ENCODE measurements at regions of chr13 and their contacts with region 1.

Region 1: DNA sequence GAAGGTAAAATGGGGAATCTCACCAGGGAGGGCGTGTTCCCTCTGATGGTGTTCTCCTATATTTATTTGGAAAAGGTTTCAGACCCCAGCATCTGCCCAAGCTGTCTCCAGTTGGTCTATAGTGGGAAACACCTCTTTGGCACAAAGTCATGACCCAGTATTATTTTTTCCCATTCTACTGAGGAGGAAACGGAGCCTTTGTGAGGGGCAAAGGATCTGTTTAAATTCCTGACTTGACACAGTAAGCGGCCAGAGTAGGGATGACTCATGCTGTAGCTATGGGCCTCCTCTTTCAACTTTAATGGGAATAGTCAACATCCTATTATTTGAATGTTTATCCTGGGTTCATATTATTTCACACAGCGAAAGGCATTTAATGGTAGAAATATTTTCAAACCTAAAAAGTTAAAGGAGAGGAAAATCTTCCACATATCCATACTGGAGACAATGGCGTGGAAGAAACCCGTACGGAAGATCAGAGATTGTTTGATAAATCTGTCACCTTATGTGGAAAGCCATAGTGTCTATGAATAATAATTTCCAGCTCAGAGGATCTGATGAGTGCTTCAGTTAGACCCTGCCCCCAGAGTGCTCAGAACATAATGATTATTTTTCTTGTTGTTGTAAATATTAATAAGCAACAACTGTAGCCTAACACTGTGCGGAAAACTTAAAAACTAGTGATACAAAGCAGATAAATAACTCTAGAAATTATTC is 126.0 kb downstream of the FOXO1 start:
- DNase-seq: peak; percentile 63 to 69
- H3K4me3 ChIP-seq: no peak overlapping the region
- H3K4me3 Mint-ChIP-seq: peak overlapping the region; percentile 55
- H3K27ac Mint-ChIP-seq: peak overlapping the region; percentile 93
- H3K4me1 ChIP-seq: peaks cover 41% of the 10 kb centered on the region
- H3K4me1 Mint-ChIP-seq: peaks cover 25% of the 10 kb centered on the region
- H3K27me3 ChIP-seq: no peaks in the 10 kb centered on the region
- H3K27me3 Mint-ChIP-seq: no peaks in the 10 kb centered on the region
- CTCF ChIP-seq: no peak

Region 2: DNA sequence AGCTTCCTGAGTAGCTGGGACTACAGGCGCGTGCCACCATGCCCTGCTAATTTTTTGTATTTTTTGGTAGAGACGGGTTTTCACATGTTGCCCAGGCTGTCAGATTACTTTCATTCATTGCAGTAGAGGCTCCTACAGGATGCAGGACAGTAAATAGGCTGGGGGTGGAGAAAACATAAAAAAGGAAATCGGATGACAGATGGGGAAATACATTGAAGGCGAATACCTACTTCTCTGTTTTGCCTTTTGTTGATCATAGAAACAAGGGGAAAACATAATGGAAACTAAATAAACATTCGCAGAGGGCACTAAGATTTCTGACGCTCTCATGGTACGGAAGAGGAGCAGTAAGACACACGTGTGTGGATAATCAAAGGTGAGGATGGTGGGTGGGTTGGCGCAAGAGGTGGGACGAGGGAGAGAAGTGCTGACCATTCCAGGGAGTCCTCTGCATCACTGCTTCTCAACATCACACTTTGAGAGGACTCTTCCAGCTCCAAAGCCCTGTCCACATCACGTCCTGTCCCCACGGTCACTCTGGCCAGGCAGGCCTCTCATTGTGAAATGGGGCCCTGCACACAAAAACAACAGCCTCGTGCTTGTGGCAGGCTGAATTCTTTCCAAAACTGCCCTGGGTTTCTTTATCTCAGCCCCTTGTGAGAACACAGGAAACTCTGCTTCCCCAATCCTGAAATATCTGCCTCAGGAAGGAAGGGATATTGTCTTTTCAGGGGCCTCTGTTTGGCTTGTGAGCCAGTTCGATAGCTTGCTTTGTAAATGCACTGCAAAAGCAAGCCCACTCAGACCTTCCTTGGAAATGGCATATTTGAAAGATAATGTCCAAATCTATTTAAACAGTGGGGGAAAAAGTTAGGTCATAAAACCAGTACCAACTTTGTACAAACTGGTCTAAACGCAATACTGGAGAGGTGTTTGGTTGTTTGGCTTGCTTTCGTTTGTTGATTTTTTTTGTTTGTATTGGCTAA is 62.6 kb before region 1 on chr13:
- CTCF ChIA-PET with region 1: no interaction called
- POLR2A ChIA-PET with region 1: no interaction called
- intact Hi-C with region 1: loop called (anchors 5 kb)
- DNase-seq: no peak
- H3K4me3 ChIP-seq: no peak overlapping the region
- H3K4me3 Mint-ChIP-seq: peak overlapping the region; percentile 42
- H3K27ac Mint-ChIP-seq: no peak overlapping the region
- H3K4me1 ChIP-seq: peaks cover 26% of the 10 kb centered on the region
- H3K4me1 Mint-ChIP-seq: peaks cover 26% of the 10 kb centered on the region
- H3K27me3 ChIP-seq: no peaks in the 10 kb centered on the region
- H3K27me3 Mint-ChIP-seq: no peaks in the 10 kb centered on the region
- CTCF ChIP-seq: no peak

Region 3: DNA sequence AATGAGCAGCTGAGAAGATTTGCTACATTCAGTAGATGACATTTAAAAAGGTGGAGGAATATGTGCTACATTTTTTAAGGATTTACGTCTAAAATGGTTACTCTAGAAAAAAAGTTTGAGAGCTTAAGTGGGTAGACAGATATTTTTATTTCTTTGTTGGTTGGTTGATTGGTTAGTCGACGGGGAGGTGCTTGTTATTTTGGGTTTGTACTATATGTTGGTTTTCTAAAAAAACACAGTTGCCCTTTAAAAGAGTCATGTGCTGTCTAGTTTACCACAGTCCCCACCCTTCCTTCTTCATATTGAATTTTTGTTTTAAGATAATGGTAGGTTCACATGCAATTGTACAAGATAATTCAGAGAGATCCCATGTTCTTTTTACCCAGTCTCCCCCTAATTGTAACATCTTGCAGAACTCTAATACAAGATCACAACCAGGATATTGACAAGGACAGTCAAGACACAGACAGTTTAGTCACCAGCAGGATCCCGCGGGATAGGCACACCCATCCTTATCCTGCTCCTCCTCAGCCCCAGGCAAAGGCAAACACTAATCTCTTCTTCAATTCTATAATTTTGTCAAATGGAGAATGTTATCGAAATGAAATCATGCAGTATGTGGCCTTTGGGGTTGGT is 45.4 kb before region 1 on chr13:
- CTCF ChIA-PET with region 1: no interaction called
- POLR2A ChIA-PET with region 1: no interaction called
- intact Hi-C with region 1: loop called (anchors 5 kb)
- DNase-seq: no peak
- H3K4me3 ChIP-seq: no peak overlapping the region
- H3K4me3 Mint-ChIP-seq: no peak overlapping the region
- H3K27ac Mint-ChIP-seq: no peak overlapping the region
- H3K4me1 ChIP-seq: peaks cover 22% of the 10 kb centered on the region
- H3K4me1 Mint-ChIP-seq: peaks cover 43% of the 10 kb centered on the region
- H3K27me3 ChIP-seq: no peaks in the 10 kb centered on the region
- H3K27me3 Mint-ChIP-seq: no peaks in the 10 kb centered on the region
- CTCF ChIP-seq: no peak

Region 4: DNA sequence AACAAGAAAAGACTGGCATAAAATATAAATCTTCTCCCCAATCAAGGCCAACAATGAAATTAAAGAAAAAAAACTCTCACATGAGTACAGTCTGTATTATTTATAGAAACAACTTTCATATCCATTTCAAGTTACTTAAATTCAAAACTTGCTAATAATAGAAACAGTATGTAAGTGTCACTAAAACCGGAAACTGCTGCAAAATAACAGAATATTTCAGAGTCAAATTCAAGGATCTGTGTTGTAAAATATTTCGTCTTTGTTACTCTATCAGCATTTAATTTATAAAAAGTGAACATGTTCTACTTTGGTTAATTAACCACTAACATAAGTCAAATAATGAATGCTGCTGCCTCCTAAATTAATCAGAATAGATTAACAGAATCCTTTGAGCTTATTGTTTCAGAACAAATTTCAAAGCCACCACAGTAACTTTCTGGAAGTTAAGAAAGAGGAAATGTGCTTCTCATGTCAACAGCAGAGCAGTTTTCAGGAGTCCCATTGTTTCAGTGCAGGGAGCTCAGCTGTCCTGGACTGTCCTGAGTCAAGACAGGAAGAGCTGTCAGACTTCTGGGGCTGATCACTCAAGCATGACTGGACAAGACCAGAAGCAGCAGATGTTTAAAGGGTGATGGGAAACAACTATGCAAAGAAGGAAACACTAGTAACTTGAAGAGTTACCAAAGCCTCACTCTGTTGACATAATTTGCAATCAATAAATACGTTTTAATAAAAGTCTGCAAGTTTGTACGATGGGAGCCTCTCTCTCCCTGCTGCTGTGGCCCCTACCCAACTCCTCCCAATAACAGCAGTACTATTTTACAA is 49.0 kb after region 1 on chr13:
- CTCF ChIA-PET with region 1: no interaction called
- POLR2A ChIA-PET with region 1: no interaction called
- intact Hi-C with region 1: loop called (anchors 2 kb)
- DNase-seq: no peak
- H3K4me3 ChIP-seq: no peak overlapping the region
- H3K4me3 Mint-ChIP-seq: no peak overlapping the region
- H3K27ac Mint-ChIP-seq: no peak overlapping the region
- H3K4me1 ChIP-seq: peaks cover 48% of the 10 kb centered on the region
- H3K4me1 Mint-ChIP-seq: peaks cover 34% of the 10 kb centered on the region
- H3K27me3 ChIP-seq: no peaks in the 10 kb centered on the region
- H3K27me3 Mint-ChIP-seq: no peaks in the 10 kb centered on the region
- CTCF ChIP-seq: no peak

Region 5: GRCh38 chr13:40644838-40645604 is 104.5 kb after region 1 on chr13:
- CTCF ChIA-PET with region 1: interaction called, 3 read pairs
- POLR2A ChIA-PET with region 1: interaction called, 3 read pairs
- intact Hi-C with region 1: loop called (anchors 5 kb)
- DNase-seq: peak in 1 of 2 experiments; percentile 61
- H3K4me3 ChIP-seq: no peak overlapping the region
- H3K4me3 Mint-ChIP-seq: peak overlapping the region; percentile 43
- H3K27ac Mint-ChIP-seq: peak overlapping the region; percentile 89
- H3K4me1 ChIP-seq: peaks cover 30% of the 10 kb centered on the region
- H3K4me1 Mint-ChIP-seq: peaks cover 25% of the 10 kb centered on the region
- H3K27me3 ChIP-seq: no peaks in the 10 kb centered on the region
- H3K27me3 Mint-ChIP-seq: no peaks in the 10 kb centered on the region
- CTCF ChIP-seq: no peak

Region 6: DNA sequence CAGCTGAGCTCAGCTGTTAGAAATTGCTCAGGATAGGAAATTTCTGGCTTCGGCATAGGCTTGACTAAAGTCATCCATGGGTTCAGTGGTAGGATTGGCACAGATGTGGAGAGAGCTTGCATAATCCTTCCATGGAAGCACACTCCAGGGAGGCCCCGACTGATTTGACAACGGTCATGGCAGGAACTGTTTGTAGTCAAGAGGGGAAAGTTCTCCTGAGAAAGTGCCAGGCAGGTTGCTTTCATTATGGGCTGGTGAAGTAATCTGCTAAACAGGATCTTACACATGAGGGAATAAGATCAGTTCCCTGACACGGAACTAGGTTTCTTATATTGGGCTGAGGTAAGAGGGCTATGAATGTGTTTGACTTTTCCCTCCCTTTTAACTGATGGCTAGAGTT is 1037.0 kb after region 1 on chr13:
- CTCF ChIA-PET with region 1: no interaction called
- POLR2A ChIA-PET with region 1: no interaction called
- intact Hi-C with region 1: no loop called
- DNase-seq: no peak
- H3K4me3 ChIP-seq: no peak overlapping the region
- H3K4me3 Mint-ChIP-seq: no peak overlapping the region
- H3K27ac Mint-ChIP-seq: no peak overlapping the region
- H3K4me1 ChIP-seq: no peaks in the 10 kb centered on the region; the same call in 1 of the 2 replicates
- H3K4me1 Mint-ChIP-seq: no peaks in the 10 kb centered on the region
- H3K27me3 ChIP-seq: no peaks in the 10 kb centered on the region
- H3K27me3 Mint-ChIP-seq: no peaks in the 10 kb centered on the region
- CTCF ChIP-seq: no peak